Endothelial cell of umbilical vein (primary cell): ENCODE measurements at regions of chr17 and their contacts with region 1.

Region 1: DNA sequence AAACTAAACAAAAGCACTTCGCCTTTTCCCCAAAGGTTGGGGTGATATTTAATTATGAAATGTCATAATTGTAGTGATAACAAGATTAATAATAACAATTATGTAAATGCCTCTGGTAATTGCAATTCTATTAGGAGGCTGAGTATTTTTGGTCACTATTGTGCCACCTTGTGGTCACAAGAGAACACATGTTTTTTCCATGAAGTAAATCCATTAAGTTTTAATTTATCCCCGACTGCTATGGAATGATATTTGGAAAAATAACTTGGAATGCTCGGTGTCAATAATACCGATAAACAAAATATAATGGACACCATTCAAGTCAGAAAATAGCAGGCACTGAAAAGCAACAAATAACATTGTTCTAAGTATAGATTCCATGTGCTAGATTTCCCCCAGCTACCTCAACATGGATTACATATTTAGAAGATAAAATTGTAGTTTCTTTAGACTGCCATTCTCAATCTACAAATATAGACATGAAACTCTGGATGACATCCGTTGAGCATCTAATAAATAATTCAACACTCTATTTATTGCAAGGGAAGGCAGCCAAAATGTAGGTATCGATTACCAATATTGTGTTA is 25.0 kb upstream of the KCNJ2 start:
- DNase-seq: peak; percentile 76
- H3K4me3 ChIP-seq: no peak overlapping the region
- H3K27ac ChIP-seq: no peak overlapping the region
- H3K4me1 ChIP-seq: peaks cover 2% of the 10 kb centered on the region
- H3K27me3 ChIP-seq: no peaks in the 10 kb centered on the region
- CTCF ChIP-seq: peak; percentile 5 to 16
- POLR2A ChIP-seq: no peak

Region 2: DNA sequence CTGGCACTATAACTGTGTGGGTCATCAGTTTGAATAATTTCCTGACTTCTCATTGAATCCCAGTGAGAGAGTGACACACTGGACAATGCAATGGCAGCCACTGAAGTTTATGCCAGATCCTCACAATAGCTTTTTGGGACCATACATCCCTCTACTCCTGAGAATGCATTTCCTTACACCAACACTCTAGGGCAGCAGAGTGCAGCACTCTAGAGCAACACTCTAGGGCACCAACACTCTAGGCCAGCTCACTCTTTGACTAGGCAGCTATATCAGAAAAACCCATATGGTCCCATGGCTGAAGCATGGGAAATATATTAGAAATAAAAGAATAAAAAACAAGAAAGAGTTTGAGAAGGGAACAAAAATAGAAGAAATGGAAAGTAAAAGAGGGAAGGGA is 420.6 kb before region 1 on chr17:
- CTCF ChIA-PET with region 1: interaction called, 13 read pairs
- POLR2A ChIA-PET with region 1: no interaction called
- dilution Hi-C with region 1: no loop called
- intact Hi-C with region 1: loop called (anchors 5 kb)
- DNase-seq: peak; percentile 25
- H3K4me3 ChIP-seq: no peak overlapping the region
- H3K27ac ChIP-seq: no peak overlapping the region
- H3K4me1 ChIP-seq: no peaks in the 10 kb centered on the region
- H3K27me3 ChIP-seq: no peaks in the 10 kb centered on the region
- CTCF ChIP-seq: peak; percentile 11 to 18
- POLR2A ChIP-seq: no peak

Region 3: GRCh38 chr17:70040336-70040735 is 104.0 kb before region 1 on chr17:
- CTCF ChIA-PET with region 1: interaction called, 4 read pairs
- POLR2A ChIA-PET with region 1: no interaction called
- dilution Hi-C with region 1: no loop called
- intact Hi-C with region 1: loop called (anchors 1 kb)
- DNase-seq: peak; percentile 94
- H3K4me3 ChIP-seq: no peak overlapping the region
- H3K27ac ChIP-seq: peak overlapping the region; percentile 90
- H3K4me1 ChIP-seq: peaks cover 29% of the 10 kb centered on the region
- H3K27me3 ChIP-seq: no peaks in the 10 kb centered on the region
- CTCF ChIP-seq: no peak
- POLR2A ChIP-seq: no peak

Region 4: GRCh38 chr17:70110443-70110880 is 33.9 kb before region 1 on chr17:
- CTCF ChIA-PET with region 1: interaction called, 13 read pairs
- POLR2A ChIA-PET with region 1: no interaction called
- dilution Hi-C with region 1: no loop called
- intact Hi-C with region 1: loop called (anchors 1 kb)
- DNase-seq: peak; percentile 99
- H3K4me3 ChIP-seq: no peak overlapping the region
- H3K27ac ChIP-seq: peak overlapping the region; percentile 82
- H3K4me1 ChIP-seq: peaks cover 27% of the 10 kb centered on the region
- H3K27me3 ChIP-seq: no peaks in the 10 kb centered on the region
- CTCF ChIP-seq: no peak
- POLR2A ChIP-seq: peak; percentile 42

Region 5: GRCh38 chr17:70242781-70243437 is 98.6 kb after region 1 on chr17:
- CTCF ChIA-PET with region 1: no interaction called
- POLR2A ChIA-PET with region 1: no interaction called
- dilution Hi-C with region 1: no loop called
- intact Hi-C with region 1: no loop called
- DNase-seq: peak; percentile 22
- H3K4me3 ChIP-seq: no peak overlapping the region
- H3K27ac ChIP-seq: no peak overlapping the region
- H3K4me1 ChIP-seq: peaks cover 8% of the 10 kb centered on the region
- H3K27me3 ChIP-seq: no peaks in the 10 kb centered on the region
- CTCF ChIP-seq: no peak
- POLR2A ChIP-seq: no peak

Region 6: DNA sequence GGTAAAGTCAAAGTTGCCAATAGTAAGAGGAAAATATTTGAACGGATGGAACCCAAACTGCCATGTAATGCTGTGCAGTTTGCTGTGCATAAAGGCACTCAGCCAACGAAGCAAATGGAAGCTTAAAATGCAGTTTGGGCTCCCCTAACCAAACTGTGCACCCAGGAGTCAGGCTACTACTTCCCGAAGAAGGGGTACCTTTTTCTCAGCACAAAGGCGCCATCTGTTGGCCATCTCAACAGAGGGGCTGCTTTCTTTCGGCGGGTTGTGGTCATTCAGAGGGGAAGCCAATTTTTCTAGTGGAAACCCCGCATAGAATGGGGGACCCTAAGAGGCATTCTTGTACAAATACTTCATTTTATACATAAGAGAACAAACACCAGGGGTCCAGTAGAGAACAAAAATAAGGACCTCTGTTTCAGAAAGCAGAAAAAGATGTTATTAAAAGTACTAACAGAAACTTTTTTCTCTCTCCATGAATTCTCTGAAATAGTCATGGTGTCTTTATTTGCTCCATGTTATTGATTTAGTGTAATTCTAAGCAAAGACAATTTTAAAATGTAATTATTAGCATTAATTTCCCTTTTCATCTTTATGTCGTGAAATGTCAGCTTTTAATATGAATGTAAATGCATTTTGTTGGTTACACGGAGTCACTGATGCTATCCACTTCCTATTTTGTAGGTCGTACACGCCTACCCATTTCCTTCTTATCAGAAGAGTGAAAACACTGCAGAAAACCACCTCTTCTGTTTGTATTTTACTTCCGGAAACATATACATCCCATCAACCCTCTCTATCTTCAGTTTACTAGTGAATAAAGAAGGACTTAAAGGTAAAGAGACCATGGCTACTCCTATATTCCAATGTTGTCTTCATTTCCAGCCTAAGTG is 478.3 kb after region 1 on chr17:
- CTCF ChIA-PET with region 1: interaction called, 10 read pairs
- POLR2A ChIA-PET with region 1: no interaction called
- dilution Hi-C with region 1: no loop called
- intact Hi-C with region 1: loop called (anchors 1 kb)
- DNase-seq: peak; percentile 76
- H3K4me3 ChIP-seq: no peak overlapping the region
- H3K27ac ChIP-seq: no peak overlapping the region
- H3K4me1 ChIP-seq: peaks cover 5% of the 10 kb centered on the region
- H3K27me3 ChIP-seq: no peaks in the 10 kb centered on the region
- CTCF ChIP-seq: peak; percentile 64 to 79
- POLR2A ChIP-seq: no peak